WTC11 (cell line): ENCODE measurements at regions of chr15 and their contacts with region 1.

Region 1: GRCh38 chr15:79184465-79184892 is 93.9 kb upstream of the RASGRF1 start:
- DNase-seq: peak; percentile 80
- ATAC-seq: peak; percentile 75
- H3K4me3 Mint-ChIP-seq: no peak overlapping the region
- H3K27ac Mint-ChIP-seq: no peak overlapping the region
- H3K4me1 Mint-ChIP-seq: peaks cover 4% of the 10 kb centered on the region
- H3K27me3 Mint-ChIP-seq: peaks cover 12% of the 10 kb centered on the region
- CTCF ChIP-seq: peak; percentile 90

Region 2: GRCh38 chr15:78927077-78927784 is 257.2 kb before region 1 on chr15:
- CTCF ChIA-PET with region 1: interaction called, 10 read pairs
- POLR2A ChIA-PET with region 1: no interaction called
- DNase-seq: no peak
- ATAC-seq: no peak
- H3K4me3 Mint-ChIP-seq: no peak overlapping the region
- H3K27ac Mint-ChIP-seq: no peak overlapping the region
- H3K4me1 Mint-ChIP-seq: peaks cover 2% of the 10 kb centered on the region; the same call in 1 of the 2 replicates
- H3K27me3 Mint-ChIP-seq: no peaks in the 10 kb centered on the region
- CTCF ChIP-seq: no peak

Region 3: DNA sequence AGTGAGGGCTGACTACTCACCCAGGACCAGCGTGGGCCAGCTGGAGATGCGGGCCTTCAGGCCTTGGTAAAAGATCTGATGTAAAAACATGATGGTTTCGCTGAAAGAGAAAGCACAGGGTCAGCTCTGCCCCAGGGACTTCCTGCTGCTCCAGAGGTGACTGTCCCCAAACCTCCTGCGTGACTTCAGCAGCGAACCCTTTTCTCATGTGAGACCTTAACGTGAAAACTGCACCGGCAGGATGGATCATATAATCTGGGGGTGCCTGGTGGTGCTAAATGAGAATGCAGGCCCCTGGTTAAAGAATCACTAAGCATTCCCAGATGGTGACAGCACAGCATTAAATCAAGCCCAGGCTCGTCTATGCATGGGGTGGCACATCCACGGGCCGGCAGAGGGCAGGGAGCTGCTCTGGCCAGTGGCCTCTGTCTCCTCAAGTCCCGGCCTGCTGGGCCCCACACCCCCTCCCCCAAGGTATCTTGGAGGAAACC is 149.3 kb before region 1 on chr15:
- CTCF ChIA-PET with region 1: interaction called, 276 read pairs
- POLR2A ChIA-PET with region 1: interaction called, 3 read pairs
- DNase-seq: no peak
- ATAC-seq: peak; percentile 80
- H3K4me3 Mint-ChIP-seq: no peak overlapping the region
- H3K27ac Mint-ChIP-seq: no peak overlapping the region
- H3K4me1 Mint-ChIP-seq: peaks cover 11% of the 10 kb centered on the region; the same call in 1 of the 2 replicates
- H3K27me3 Mint-ChIP-seq: no peaks in the 10 kb centered on the region; the same call in 1 of the 2 replicates
- CTCF ChIP-seq: no peak

Region 4: GRCh38 chr15:79130535-79131130 is 53.8 kb before region 1 on chr15:
- CTCF ChIA-PET with region 1: interaction called, 19 read pairs
- POLR2A ChIA-PET with region 1: no interaction called
- DNase-seq: no peak
- ATAC-seq: peak; percentile 88
- H3K4me3 Mint-ChIP-seq: no peak overlapping the region
- H3K27ac Mint-ChIP-seq: no peak overlapping the region
- H3K4me1 Mint-ChIP-seq: peaks cover 8% of the 10 kb centered on the region
- H3K27me3 Mint-ChIP-seq: peaks cover 19% of the 10 kb centered on the region
- CTCF ChIP-seq: peak; percentile 61

Region 5: GRCh38 chr15:79168922-79169456 is 15.5 kb before region 1 on chr15:
- CTCF ChIA-PET with region 1: interaction called, 22 read pairs
- POLR2A ChIA-PET with region 1: no interaction called
- DNase-seq: peak; percentile 57
- ATAC-seq: peak; percentile 86
- H3K4me3 Mint-ChIP-seq: no peak overlapping the region
- H3K27ac Mint-ChIP-seq: no peak overlapping the region
- H3K4me1 Mint-ChIP-seq: peaks cover 24% of the 10 kb centered on the region
- H3K27me3 Mint-ChIP-seq: peaks cover 4% of the 10 kb centered on the region; the same call in 1 of the 2 replicates
- CTCF ChIP-seq: no peak

Region 6: GRCh38 chr15:79349525-79349924 is 165.0 kb after region 1 on chr15:
- CTCF ChIA-PET with region 1: no interaction called
- POLR2A ChIA-PET with region 1: no interaction called
- DNase-seq: no peak
- ATAC-seq: no peak
- H3K4me3 Mint-ChIP-seq: no peak overlapping the region
- H3K27ac Mint-ChIP-seq: no peak overlapping the region
- H3K4me1 Mint-ChIP-seq: no peaks in the 10 kb centered on the region
- H3K27me3 Mint-ChIP-seq: no peaks in the 10 kb centered on the region
- CTCF ChIP-seq: no peak